ENCODE measurements at regions of chr6 and their contacts with region 1.

Region 1: GRCh38 chr6:65566117-65566516 is 140.9 kb downstream of the EYS start:
- DNase-seq: peak; percentile 14
- ATAC-seq: peak; percentile 79
- H3K4me3 ChIP-seq: no peak overlapping the region
- H3K27ac ChIP-seq: no peak overlapping the region
- H3K4me1 ChIP-seq: no peaks in the 10 kb centered on the region
- H3K27me3 ChIP-seq: no peaks in the 10 kb centered on the region
- CTCF ChIP-seq: peak; percentile 40; the same call in 1 of the 2 replicates
- EP300 ChIP-seq: no peak
- POLR2A ChIP-seq: no peak
- RAD21 ChIP-seq: no peak

Region 2: GRCh38 chr6:64334636-64335035 is 1231.5 kb before region 1 on chr6:
- CTCF ChIA-PET with region 1: no interaction called
- POLR2A ChIA-PET with region 1: no interaction called
- in situ Hi-C with region 1: no loop called
- intact Hi-C with region 1: no loop called
- DNase-seq: no peak
- ATAC-seq: no peak
- H3K4me3 ChIP-seq: no peak overlapping the region
- H3K27ac ChIP-seq: no peak overlapping the region
- H3K4me1 ChIP-seq: no peaks in the 10 kb centered on the region
- H3K27me3 ChIP-seq: no peaks in the 10 kb centered on the region
- CTCF ChIP-seq: no peak
- EP300 ChIP-seq: no peak
- POLR2A ChIP-seq: no peak
- RAD21 ChIP-seq: no peak

Region 3: GRCh38 chr6:65680232-65680631 is 114.1 kb after region 1 on chr6:
- CTCF ChIA-PET with region 1: no interaction called
- POLR2A ChIA-PET with region 1: no interaction called
- in situ Hi-C with region 1: no loop called
- intact Hi-C with region 1: no loop called
- DNase-seq: no peak
- ATAC-seq: no peak
- H3K4me3 ChIP-seq: no peak overlapping the region
- H3K27ac ChIP-seq: no peak overlapping the region
- H3K4me1 ChIP-seq: no peaks in the 10 kb centered on the region
- H3K27me3 ChIP-seq: no peaks in the 10 kb centered on the region
- CTCF ChIP-seq: no peak
- EP300 ChIP-seq: no peak
- POLR2A ChIP-seq: no peak
- RAD21 ChIP-seq: no peak

Region 4: DNA sequence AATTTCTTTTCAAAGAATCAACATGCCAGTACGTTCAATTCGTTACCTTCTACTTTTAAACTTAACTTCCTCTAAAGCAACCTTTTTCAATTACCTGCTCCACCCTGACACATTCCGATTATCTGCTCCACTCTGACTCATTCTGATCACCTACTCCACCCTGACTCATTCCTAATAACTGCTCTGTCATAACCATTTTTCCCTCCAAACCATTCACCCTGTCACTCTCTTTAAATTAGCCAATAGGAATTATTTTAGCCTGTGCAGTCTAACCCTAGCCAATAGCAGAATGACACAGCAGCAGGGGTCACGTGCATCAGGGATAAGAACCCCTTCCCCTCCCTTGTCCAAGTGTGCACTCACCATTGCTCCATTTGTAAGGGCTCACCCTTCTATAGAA is 698.3 kb after region 1 on chr6:
- CTCF ChIA-PET with region 1: no interaction called
- POLR2A ChIA-PET with region 1: no interaction called
- in situ Hi-C with region 1: no loop called
- intact Hi-C with region 1: loop called (anchors 2 kb)
- DNase-seq: no peak
- ATAC-seq: no peak
- H3K4me3 ChIP-seq: no peak overlapping the region
- H3K27ac ChIP-seq: no peak overlapping the region
- H3K4me1 ChIP-seq: no peaks in the 10 kb centered on the region
- H3K27me3 ChIP-seq: no peaks in the 10 kb centered on the region
- CTCF ChIP-seq: no peak
- EP300 ChIP-seq: no peak
- POLR2A ChIP-seq: no peak
- RAD21 ChIP-seq: no peak

Measured in HepG2 (cell line).